ENCODE measurements at regions of chr2 and their contacts with region 1.

Region 1: GRCh38 chr2:152826581-152827279 is 108.3 kb downstream of the ARL6IP6 start:
- DNase-seq: peak; percentile 23
- ATAC-seq: peak; percentile 43
- H3K4me3 ChIP-seq: no peak overlapping the region
- H3K27ac ChIP-seq: peak overlapping the region; percentile 16; the same call in 1 of the 2 replicates
- H3K4me1 ChIP-seq: peaks cover 8% of the 10 kb centered on the region; the same call in 1 of the 2 replicates
- H3K27me3 ChIP-seq: no peaks in the 10 kb centered on the region
- CTCF ChIP-seq: no peak
- POLR2A ChIP-seq: no peak
- RAD21 ChIP-seq: no peak

Region 2: DNA sequence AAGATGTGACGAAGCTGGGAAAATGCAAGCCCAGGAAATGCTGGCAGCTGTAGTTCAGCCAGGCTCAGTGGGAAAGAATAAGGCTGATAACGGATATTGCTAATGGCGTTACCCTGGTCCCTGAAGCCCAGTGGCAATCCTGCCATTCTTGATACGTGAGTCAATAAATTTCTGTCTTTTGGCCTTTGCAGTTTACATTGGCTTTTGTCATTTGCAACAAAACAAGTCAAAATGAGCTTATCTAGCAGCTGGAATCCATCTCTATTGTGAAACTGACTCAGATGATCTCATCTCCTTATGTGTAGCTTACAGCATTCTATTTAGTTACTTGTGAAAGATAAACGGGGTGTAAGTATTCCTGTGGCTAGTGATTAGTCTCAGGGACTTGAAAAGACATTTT is 64.5 kb before region 1 on chr2:
- CTCF ChIA-PET with region 1: no interaction called
- POLR2A ChIA-PET with region 1: no interaction called
- dilution Hi-C with region 1: no loop called
- in situ Hi-C with region 1: no loop called
- intact Hi-C with region 1: loop called (anchors 2 kb)
- DNase-seq: peak; percentile 96
- ATAC-seq: peak; percentile 81
- H3K4me3 ChIP-seq: no peak overlapping the region
- H3K27ac ChIP-seq: peak overlapping the region; percentile 68; the same call in 1 of the 2 replicates
- H3K4me1 ChIP-seq: peaks cover 9% of the 10 kb centered on the region
- H3K27me3 ChIP-seq: no peaks in the 10 kb centered on the region
- CTCF ChIP-seq: no peak
- POLR2A ChIP-seq: no peak
- RAD21 ChIP-seq: no peak

Region 3: DNA sequence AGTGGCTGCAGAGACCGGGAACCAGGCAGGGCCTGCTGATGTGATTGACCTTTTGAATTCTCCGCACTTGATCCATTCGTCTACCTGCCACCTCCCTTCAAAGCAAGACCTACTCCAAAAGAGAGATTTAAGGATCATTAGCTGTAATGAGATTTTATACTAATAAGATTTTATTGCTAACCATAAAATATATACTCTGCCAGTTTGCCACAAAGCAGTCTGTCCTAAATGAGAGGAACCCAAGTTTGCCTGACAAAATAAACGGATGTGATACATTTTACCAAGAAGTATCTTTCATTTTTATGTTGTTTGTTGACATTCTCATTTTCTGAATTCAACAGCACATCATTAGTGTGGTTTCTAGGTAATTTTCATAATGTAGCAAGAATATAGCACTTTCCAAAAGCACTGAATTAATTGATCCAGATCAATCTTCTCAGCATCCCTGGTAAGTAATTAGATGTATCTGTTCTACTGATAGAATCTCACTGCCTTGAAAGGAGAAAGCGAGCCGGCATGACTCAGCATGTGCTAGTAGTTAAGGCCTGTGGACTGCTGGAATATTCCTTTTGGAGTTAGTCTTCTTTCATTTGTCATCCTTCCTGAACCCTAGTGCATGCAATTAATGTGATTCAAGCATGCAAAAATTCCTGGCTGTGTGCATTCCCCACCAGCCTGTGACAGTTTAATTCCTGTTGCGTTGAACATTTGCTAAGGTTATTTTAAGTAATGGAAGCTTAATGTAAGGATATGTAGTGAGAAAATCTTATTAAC is 20.2 kb after region 1 on chr2:
- CTCF ChIA-PET with region 1: no interaction called
- POLR2A ChIA-PET with region 1: no interaction called
- dilution Hi-C with region 1: no loop called
- in situ Hi-C with region 1: no loop called
- intact Hi-C with region 1: no loop called
- DNase-seq: peak; percentile 59
- ATAC-seq: peak; percentile 95
- H3K4me3 ChIP-seq: no peak overlapping the region
- H3K27ac ChIP-seq: no peak overlapping the region
- H3K4me1 ChIP-seq: no peaks in the 10 kb centered on the region
- H3K27me3 ChIP-seq: no peaks in the 10 kb centered on the region
- CTCF ChIP-seq: no peak
- POLR2A ChIP-seq: no peak
- RAD21 ChIP-seq: no peak

Region 4: GRCh38 chr2:152864601-152865149 is 37.9 kb after region 1 on chr2:
- CTCF ChIA-PET with region 1: no interaction called
- POLR2A ChIA-PET with region 1: no interaction called
- dilution Hi-C with region 1: no loop called
- in situ Hi-C with region 1: no loop called
- intact Hi-C with region 1: no loop called
- DNase-seq: no peak
- ATAC-seq: no peak
- H3K4me3 ChIP-seq: no peak overlapping the region
- H3K27ac ChIP-seq: no peak overlapping the region
- H3K4me1 ChIP-seq: no peaks in the 10 kb centered on the region
- H3K27me3 ChIP-seq: no peaks in the 10 kb centered on the region
- CTCF ChIP-seq: no peak
- POLR2A ChIP-seq: no peak
- RAD21 ChIP-seq: no peak